Mucosa of descending colon (tissue), 3 donors: ENCODE measurements at regions of chr12 and their contacts with region 1.

Region 1: DNA sequence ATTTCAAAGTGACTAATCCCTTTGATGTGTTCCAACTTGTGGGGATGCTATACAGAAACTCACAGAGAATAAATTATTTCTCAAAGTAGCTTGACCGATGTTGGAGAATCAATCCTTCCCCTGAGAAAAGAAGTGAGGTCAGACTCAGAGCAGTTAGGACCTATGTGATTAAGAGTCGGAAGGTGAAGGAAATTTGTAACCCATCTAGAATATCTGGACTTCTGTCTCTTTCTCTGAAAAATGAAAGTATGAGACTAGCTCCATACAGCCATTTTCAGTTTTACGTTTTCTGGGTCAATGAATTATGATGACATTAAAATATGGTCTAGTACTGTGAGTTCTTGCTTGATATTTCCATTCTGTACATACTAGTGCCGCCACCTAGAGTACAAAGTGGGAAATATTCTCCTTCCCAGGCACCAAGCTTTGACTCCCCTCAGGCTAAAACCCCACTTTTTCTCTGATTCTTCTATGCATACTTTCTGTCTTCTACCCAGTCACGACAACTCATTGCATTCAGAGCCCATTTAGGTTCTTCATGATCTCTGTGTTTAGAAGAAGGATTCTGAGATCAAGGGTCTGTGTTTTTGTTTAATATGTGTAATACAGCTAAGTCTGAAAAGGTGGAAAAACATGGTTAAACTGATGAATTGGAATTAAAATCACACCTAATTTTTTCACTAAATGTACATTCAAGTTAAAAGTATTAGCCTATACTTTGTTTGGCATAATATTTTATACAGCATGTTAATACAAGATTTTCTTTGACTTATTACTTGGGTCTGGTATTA is 6.9 kb upstream of the NTS start:
- DNase-seq: peak in 1 of 3 donors; percentile 65
- ATAC-seq: peak; percentile 60
- H3K4me3 ChIP-seq: no peak overlapping the region
- H3K4me1 ChIP-seq: no peaks in the 10 kb centered on the region
- CTCF ChIP-seq: peak; percentile 26

Region 2: DNA sequence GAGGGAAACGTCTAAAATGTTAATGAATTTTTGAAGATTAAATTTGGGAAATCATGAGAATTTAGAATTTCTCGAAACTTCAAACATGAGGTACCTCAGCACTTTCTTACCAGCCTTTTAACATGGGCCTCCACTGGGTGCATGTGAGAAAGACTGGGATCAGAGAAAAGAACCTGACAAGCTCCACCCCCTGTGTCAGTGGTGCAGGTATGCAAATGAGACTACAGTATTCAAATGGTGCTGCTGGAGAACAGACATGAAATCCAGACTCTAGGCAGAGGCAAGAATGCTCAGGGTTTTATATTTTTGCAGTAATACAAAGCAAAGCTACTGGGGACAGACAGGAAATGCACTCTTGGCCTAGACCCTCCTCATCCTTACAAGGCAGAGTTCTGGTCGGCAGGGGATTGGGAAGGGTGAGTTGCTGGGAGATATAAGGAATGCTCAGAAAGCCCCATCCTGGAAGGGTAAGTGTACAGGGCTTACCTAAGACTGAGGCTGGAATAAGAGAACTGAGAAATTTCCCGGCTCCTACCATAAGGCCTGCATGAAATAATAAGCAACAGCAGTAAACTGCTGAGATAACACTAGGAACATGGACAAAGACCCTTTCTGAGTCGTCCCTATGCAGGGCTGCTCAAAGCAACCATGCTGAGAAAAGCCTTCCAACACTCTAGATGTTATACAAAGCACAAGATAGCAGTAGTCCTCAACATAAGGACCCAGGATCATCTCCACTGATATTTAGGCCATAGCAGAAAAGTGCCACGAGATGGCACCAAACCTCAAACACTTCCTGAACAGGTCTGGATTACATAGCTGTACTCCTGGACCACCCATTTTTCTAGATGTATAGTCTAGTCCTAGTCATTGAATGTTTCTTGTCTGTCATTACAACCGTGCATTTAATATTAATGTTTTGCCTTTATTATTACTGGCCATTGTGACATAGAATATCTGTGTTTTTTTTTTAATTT is 291.8 kb before region 1 on chr12:
- intact Hi-C with region 1: loop called in 1 of 2 experiments (anchors 10 kb)
- DNase-seq: peak in 1 of 3 donors; percentile 66
- ATAC-seq: peak; percentile 65
- H3K4me3 ChIP-seq: no peak overlapping the region
- H3K4me1 ChIP-seq: no peaks in the 10 kb centered on the region
- CTCF ChIP-seq: peak; percentile 37

Region 3: GRCh38 chr12:85855305-85855704 is 11.9 kb before region 1 on chr12:
- intact Hi-C with region 1: no loop called
- DNase-seq: no peak
- ATAC-seq: no peak
- H3K4me3 ChIP-seq: no peak overlapping the region
- H3K4me1 ChIP-seq: no peaks in the 10 kb centered on the region
- CTCF ChIP-seq: no peak

Region 4: GRCh38 chr12:86081843-86082242 is 214.7 kb after region 1 on chr12:
- intact Hi-C with region 1: no loop called
- DNase-seq: no peak
- ATAC-seq: no peak
- H3K4me3 ChIP-seq: no peak overlapping the region
- H3K4me1 ChIP-seq: no peaks in the 10 kb centered on the region
- CTCF ChIP-seq: no peak